Naive thymus-derived CD4-positive, alpha-beta T cell (primary cell): ENCODE measurements at regions of chr5 and their contacts with region 1.

Region 1: DNA sequence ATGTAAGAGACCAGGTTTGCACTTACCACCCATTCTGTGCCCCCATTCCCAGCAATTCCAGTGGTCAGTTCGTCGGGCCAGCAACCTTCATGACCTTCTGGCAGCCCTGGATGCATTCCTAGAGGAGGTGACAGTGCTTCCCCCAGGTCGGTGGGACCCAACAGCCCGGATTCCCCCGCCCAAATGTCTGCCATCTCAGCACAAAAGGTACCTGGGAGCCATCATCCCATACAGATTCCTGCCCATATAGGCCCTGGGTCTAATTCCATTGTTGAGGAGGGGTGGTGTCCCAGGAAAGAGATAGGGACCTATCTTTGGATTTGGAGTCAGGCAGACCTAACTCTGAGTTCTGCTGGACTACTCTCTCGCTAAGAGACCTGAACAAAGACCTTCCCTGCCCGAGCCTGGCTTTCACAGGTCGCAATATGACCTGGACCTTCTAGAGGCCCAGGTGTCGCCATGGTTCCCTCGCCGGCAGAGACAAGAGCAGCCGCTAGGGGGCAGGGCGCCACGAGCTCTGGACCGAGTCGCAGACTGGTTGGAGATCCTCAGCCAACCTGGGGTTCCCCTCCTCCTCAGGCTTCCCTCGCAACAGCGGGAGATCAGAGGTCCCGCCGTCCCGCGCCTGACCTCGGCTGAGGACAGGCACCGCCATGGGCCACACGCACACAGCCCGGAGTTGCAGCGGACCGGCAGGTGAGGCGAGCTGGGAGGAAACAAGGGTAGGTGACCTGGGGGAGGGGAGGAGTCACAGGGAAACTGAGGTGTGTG is 3.1 kb downstream of the SLC4A9 start:
- DNase-seq: peak; percentile 59 to 90 (median 77)
- ATAC-seq: peak; percentile 95
- H3K4me3 ChIP-seq: peak overlapping the region; percentile 57
- H3K4me3 Mint-ChIP-seq: peak overlapping the region; percentile 54 to 83 (median 73)
- H3K27ac ChIP-seq: no peak overlapping the region
- H3K27ac Mint-ChIP-seq: no peak overlapping the region
- H3K4me1 ChIP-seq: peaks cover 0 to 4% of the 10 kb centered on the region in 2 donors
- H3K4me1 Mint-ChIP-seq: peaks cover 0 to 5% (median 4%) of the 10 kb centered on the region in 7 donors
- H3K27me3 ChIP-seq: no peaks in the 10 kb centered on the region
- H3K27me3 Mint-ChIP-seq: peaks cover 0 to 5% (median 0%) of the 10 kb centered on the region in 5 donors

Region 2: GRCh38 chr5:139745124-139745799 is 617.8 kb before region 1 on chr5:
- CTCF ChIA-PET with region 1: no interaction called
- POLR2A ChIA-PET with region 1: no interaction called
- intact Hi-C with region 1: no loop called
- DNase-seq: peak in 1 of 9 donors; percentile 45
- ATAC-seq: no peak
- H3K4me3 ChIP-seq: no peak overlapping the region
- H3K4me3 Mint-ChIP-seq: peak overlapping the region in 2 of 10 donors; percentile 9 to 25
- H3K27ac ChIP-seq: no peak overlapping the region
- H3K27ac Mint-ChIP-seq: no peak overlapping the region
- H3K4me1 ChIP-seq: peaks cover 7 to 8% of the 10 kb centered on the region in 2 donors
- H3K4me1 Mint-ChIP-seq: peaks cover 18 to 25% (median 23%) of the 10 kb centered on the region in 7 donors
- H3K27me3 ChIP-seq: no peaks in the 10 kb centered on the region
- H3K27me3 Mint-ChIP-seq: peaks cover 7 to 63% (median 15%) of the 10 kb centered on the region in 5 donors

Region 3: GRCh38 chr5:140632150-140633020 is 269.3 kb after region 1 on chr5:
- CTCF ChIA-PET with region 1: interaction called, 7 read pairs
- POLR2A ChIA-PET with region 1: no interaction called
- intact Hi-C with region 1: loop called in 1 of 2 experiments (anchors 2 kb)
- DNase-seq: peak; percentile 29 to 64 (median 51)
- ATAC-seq: peak; percentile 81
- H3K4me3 ChIP-seq: peak overlapping the region; percentile 87
- H3K4me3 Mint-ChIP-seq: peak overlapping the region; percentile 89 to 99 (median 92)
- H3K27ac ChIP-seq: peak overlapping the region; percentile 41
- H3K27ac Mint-ChIP-seq: peak overlapping the region; percentile 29 to 88 (median 79)
- H3K4me1 ChIP-seq: peaks cover 0 to 9% of the 10 kb centered on the region in 2 donors
- H3K4me1 Mint-ChIP-seq: peaks cover 16 to 36% (median 17%) of the 10 kb centered on the region in 7 donors
- H3K27me3 ChIP-seq: no peaks in the 10 kb centered on the region
- H3K27me3 Mint-ChIP-seq: peaks cover 0 to 26% (median 0%) of the 10 kb centered on the region in 5 donors

Region 4: GRCh38 chr5:140718241-140718580 is 355.2 kb after region 1 on chr5:
- CTCF ChIA-PET with region 1: interaction called, 9 read pairs
- POLR2A ChIA-PET with region 1: interaction called, 4 read pairs
- intact Hi-C with region 1: loop called (anchors 1 to 2 kb)
- DNase-seq: no peak
- ATAC-seq: no peak
- H3K4me3 ChIP-seq: no peak overlapping the region
- H3K4me3 Mint-ChIP-seq: peak overlapping the region in 4 of 10 donors; percentile 13 to 58 (median 36)
- H3K27ac ChIP-seq: no peak overlapping the region
- H3K27ac Mint-ChIP-seq: peak overlapping the region in 1 of 9 donors; percentile 67
- H3K4me1 ChIP-seq: no peaks in the 10 kb centered on the region
- H3K4me1 Mint-ChIP-seq: peaks cover 0 to 10% (median 2%) of the 10 kb centered on the region in 7 donors
- H3K27me3 ChIP-seq: peaks cover 0 to 4% of the 10 kb centered on the region in 2 donors
- H3K27me3 Mint-ChIP-seq: peaks cover 0 to 15% (median 12%) of the 10 kb centered on the region in 5 donors

Region 5: DNA sequence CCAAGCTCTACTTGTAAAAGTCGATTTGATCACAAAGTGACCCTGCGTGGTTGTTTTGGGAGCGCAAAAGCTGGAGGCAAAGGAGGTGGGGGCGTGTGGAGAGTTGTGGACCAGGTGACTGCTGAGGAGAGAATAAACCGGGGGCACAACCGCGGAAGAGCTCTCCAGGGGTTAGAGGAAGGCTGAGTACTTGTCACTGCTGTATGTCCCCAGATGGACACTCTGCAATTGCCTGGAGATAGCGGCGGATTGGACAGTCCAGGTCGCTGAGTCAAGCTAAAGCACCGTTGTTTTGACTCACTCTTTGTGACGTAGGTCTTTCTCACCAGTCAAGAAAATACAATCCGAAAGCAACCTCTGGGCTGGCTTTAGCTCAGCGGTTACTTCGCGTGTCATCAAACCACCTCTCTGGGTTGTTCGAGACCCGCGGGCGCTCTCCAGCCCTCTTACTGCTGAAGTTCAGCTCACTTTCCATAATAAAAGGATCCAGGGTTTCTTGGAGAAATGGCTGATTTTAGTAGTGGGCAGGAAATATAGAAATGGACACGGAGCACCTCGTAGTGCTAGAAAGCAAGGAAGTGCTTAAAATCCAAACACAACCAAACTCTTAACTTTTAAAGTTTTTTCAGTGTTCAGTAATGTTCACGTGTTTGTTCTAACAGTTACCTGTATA is 362.9 kb after region 1 on chr5:
- CTCF ChIA-PET with region 1: interaction called, 9 read pairs
- POLR2A ChIA-PET with region 1: no interaction called
- intact Hi-C with region 1: loop called in 1 of 2 experiments (anchors 2 kb)
- DNase-seq: peak; percentile 9 to 80 (median 45)
- ATAC-seq: peak; percentile 93
- H3K4me3 ChIP-seq: peak overlapping the region; percentile 40
- H3K4me3 Mint-ChIP-seq: peak overlapping the region; percentile 37 to 81 (median 68)
- H3K27ac ChIP-seq: no peak overlapping the region
- H3K27ac Mint-ChIP-seq: peak overlapping the region in 7 of 9 donors; percentile 51 to 93 (median 77)
- H3K4me1 ChIP-seq: no peaks in the 10 kb centered on the region
- H3K4me1 Mint-ChIP-seq: peaks cover 0 to 22% (median 17%) of the 10 kb centered on the region in 7 donors
- H3K27me3 ChIP-seq: peaks cover 0 to 4% of the 10 kb centered on the region in 2 donors
- H3K27me3 Mint-ChIP-seq: peaks cover 26 to 49% (median 35%) of the 10 kb centered on the region in 5 donors

Region 6: GRCh38 chr5:141040771-141041426 is 677.9 kb after region 1 on chr5:
- CTCF ChIA-PET with region 1: no interaction called
- POLR2A ChIA-PET with region 1: no interaction called
- intact Hi-C with region 1: loop called in 1 of 2 experiments (anchors 10 kb)
- DNase-seq: peak; percentile 14 to 70 (median 61)
- ATAC-seq: peak; percentile 76
- H3K4me3 ChIP-seq: no peak overlapping the region
- H3K4me3 Mint-ChIP-seq: no peak overlapping the region
- H3K27ac ChIP-seq: no peak overlapping the region
- H3K27ac Mint-ChIP-seq: no peak overlapping the region
- H3K4me1 ChIP-seq: no peaks in the 10 kb centered on the region
- H3K4me1 Mint-ChIP-seq: no peaks in the 10 kb centered on the region
- H3K27me3 ChIP-seq: no peaks in the 10 kb centered on the region
- H3K27me3 Mint-ChIP-seq: peaks cover 0 to 32% (median 29%) of the 10 kb centered on the region in 5 donors